ENCODE measurements at regions of chr16 and their contacts with region 1.

Region 1: DNA sequence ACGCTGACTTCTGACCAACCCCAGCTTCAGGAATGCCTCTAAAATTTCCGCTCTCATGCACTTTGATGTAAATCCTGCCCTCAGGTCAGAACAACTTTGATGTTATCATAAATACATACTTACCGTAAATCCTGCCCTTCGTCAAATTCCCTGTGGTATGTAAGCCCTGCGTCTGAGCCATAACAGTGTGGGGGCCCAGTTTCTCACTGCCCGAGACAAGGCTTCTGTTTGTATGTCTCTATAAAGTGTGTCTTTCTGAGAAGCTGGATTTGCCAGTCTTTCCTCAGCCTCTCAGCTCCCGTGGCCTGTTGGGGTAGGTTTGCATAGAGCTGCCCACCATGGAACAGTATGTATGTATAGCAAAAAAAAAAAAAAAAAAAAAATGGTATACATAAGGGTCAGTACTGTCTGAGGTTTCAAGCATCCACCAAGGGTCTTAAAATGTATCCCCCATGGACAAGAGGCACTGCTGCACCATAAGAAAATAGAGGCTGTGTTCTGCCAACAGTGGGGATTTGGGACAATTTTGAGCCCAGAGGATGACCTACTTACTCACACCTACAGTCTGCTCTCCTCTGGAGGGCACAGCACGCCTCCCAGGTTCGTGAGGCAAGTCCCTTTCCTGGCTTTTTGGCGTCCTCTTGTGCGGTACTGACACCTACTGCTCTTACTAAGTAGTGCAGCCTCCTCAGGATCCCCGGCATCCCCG is 17.5 kb downstream of the PRMT7 start:
- DNase-seq: peak; percentile 85
- ATAC-seq: peak; percentile 99
- H3K4me3 Mint-ChIP-seq: no peak overlapping the region
- H3K27ac Mint-ChIP-seq: peak overlapping the region; percentile 41
- H3K4me1 Mint-ChIP-seq: peaks cover 31% of the 10 kb centered on the region
- H3K27me3 Mint-ChIP-seq: no peaks in the 10 kb centered on the region
- CTCF ChIP-seq: peak; percentile 94

Region 2: GRCh38 chr16:68237243-68238028 is 90.9 kb before region 1 on chr16:
- CTCF ChIA-PET with region 1: interaction called, 43 read pairs
- POLR2A ChIA-PET with region 1: interaction called, 3 read pairs
- intact Hi-C with region 1: no loop called
- DNase-seq: peak; percentile 96
- ATAC-seq: peak; percentile 81
- H3K4me3 Mint-ChIP-seq: peak overlapping the region; percentile 87
- H3K27ac Mint-ChIP-seq: peak overlapping the region; percentile 94
- H3K4me1 Mint-ChIP-seq: peaks cover 36% of the 10 kb centered on the region
- H3K27me3 Mint-ChIP-seq: no peaks in the 10 kb centered on the region
- CTCF ChIP-seq: no peak

Region 3: GRCh38 chr16:68251832-68252231 is 76.5 kb before region 1 on chr16:
- CTCF ChIA-PET with region 1: interaction called, 444 read pairs
- POLR2A ChIA-PET with region 1: interaction called, 6 read pairs
- intact Hi-C with region 1: no loop called
- DNase-seq: no peak
- ATAC-seq: no peak
- H3K4me3 Mint-ChIP-seq: no peak overlapping the region
- H3K27ac Mint-ChIP-seq: no peak overlapping the region
- H3K4me1 Mint-ChIP-seq: peaks cover under 1% of the 10 kb centered on the region
- H3K27me3 Mint-ChIP-seq: no peaks in the 10 kb centered on the region
- CTCF ChIP-seq: no peak

Region 4: DNA sequence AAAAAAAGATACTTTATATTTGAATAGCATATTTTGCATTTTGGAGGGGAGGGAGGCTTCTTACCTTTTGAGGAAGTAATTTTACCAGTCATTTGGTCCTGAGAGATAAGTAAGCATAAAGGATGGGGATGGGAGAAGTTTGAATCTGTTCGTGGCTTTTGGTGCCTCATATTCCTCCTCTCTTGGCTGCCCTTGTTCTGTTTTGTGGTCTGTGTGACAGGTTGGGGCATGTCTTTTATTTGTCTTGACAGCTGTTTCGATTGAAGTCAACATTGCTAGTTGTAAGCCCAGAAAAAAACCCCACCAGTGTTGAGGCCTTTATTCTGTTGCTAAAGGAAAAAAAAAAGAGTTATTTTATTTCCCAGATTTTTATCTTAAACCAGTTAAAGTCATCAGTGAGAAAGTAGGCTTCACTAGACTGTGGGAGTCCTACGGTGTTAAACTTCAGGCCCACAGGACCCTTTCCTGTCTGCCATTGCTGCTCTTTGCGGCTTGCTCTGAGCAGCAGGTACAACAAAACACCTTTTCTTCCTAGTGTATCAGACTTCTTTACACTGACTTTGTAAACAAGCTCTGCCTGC is 52.6 kb before region 1 on chr16:
- CTCF ChIA-PET with region 1: interaction called, 31 read pairs
- POLR2A ChIA-PET with region 1: interaction called, 4 read pairs
- intact Hi-C with region 1: no loop called
- DNase-seq: peak; percentile 59
- ATAC-seq: peak; percentile 71
- H3K4me3 Mint-ChIP-seq: peak overlapping the region; percentile 3
- H3K27ac Mint-ChIP-seq: peak overlapping the region; percentile 96
- H3K4me1 Mint-ChIP-seq: peaks cover 70% of the 10 kb centered on the region
- H3K27me3 Mint-ChIP-seq: no peaks in the 10 kb centered on the region
- CTCF ChIP-seq: no peak

Region 5: DNA sequence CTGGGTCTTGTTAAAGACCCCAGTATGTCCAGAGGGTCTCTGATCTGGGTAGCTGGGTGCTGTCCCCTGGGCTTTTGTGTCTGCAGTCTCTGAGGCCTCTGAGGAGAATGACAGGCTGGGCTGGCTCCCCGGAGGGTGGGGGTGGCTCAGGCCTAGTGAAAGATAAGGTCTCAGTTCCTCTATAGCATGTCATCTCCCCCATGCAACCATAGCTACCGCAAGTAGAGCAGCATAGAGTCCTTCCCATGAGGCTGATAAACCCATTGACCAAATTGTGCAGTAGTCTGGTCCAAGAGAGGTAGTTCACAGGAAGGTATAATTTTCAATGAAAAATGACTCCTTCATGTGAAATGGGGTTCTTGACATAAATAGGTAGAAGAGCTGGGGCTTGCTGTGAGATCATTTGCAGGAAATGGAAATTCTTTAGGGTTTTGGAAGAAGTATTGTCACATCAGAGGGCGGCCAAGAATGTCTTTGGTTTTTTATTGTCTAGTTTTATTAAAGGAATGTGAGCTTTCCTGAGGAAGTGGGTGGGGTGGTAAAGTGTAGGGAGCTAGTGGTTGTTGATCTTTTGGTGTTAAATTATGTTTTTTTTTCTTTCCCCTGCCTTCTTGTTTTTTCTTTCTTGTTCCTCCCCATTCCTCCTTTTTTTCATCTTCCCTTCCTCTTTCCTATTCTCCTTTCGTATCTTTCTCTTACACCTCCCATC is 38.5 kb before region 1 on chr16:
- CTCF ChIA-PET with region 1: interaction called, 36 read pairs
- POLR2A ChIA-PET with region 1: no interaction called
- intact Hi-C with region 1: no loop called
- DNase-seq: peak; percentile 89
- ATAC-seq: peak; percentile 89
- H3K4me3 Mint-ChIP-seq: peak overlapping the region; percentile 29
- H3K27ac Mint-ChIP-seq: peak overlapping the region; percentile 95
- H3K4me1 Mint-ChIP-seq: peaks cover 82% of the 10 kb centered on the region
- H3K27me3 Mint-ChIP-seq: no peaks in the 10 kb centered on the region
- CTCF ChIP-seq: no peak

Region 6: GRCh38 chr16:68310761-68311511 is 17.4 kb before region 1 on chr16 and contains the starts of genes PRMT7 and SLC7A6OS:
- CTCF ChIA-PET with region 1: interaction called, 21 read pairs
- POLR2A ChIA-PET with region 1: interaction called, 12 read pairs
- intact Hi-C with region 1: no loop called
- DNase-seq: peak; percentile 96
- ATAC-seq: peak; percentile 99
- H3K4me3 Mint-ChIP-seq: peak within 1 kb of the TSS; percentile 83
- H3K27ac Mint-ChIP-seq: peak within 1 kb of the TSS; percentile 89
- H3K4me1 Mint-ChIP-seq: peaks cover 46% of the 10 kb centered on the region
- H3K27me3 Mint-ChIP-seq: no peaks in the 10 kb centered on the region
- CTCF ChIP-seq: no peak
- total RNA-seq, gene PRMT7: 67.4 to 78.4 TPM
- total RNA-seq, gene SLC7A6OS: 20.2 to 23.1 TPM

Region 7: DNA sequence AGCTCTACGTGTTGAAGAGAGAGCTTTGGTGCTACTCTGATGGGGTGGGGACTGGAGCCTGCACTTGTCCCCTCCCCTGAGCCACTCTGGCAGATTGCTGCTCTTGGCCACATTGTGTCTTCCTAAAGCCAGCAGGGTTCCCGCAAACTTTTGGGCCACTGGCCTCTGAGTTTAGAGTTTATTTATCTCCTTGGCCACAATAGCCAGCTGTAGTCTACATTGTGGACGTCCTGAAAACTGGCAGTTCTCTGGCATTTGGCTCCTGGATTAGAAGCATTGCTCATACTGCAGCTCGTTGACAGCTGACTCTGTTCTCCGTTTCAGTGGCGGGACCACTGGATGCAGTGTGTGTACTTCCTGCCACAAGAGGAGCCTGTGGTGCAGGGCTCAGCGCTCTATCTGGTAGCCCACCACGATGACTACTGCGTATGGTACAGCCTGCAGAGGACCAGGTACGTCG is 17.1 kb after region 1 on chr16:
- CTCF ChIA-PET with region 1: interaction called, 23 read pairs
- POLR2A ChIA-PET with region 1: no interaction called
- intact Hi-C with region 1: no loop called
- DNase-seq: peak; percentile 81
- ATAC-seq: peak; percentile 98
- H3K4me3 Mint-ChIP-seq: no peak overlapping the region
- H3K27ac Mint-ChIP-seq: no peak overlapping the region
- H3K4me1 Mint-ChIP-seq: peaks cover 15% of the 10 kb centered on the region
- H3K27me3 Mint-ChIP-seq: no peaks in the 10 kb centered on the region
- CTCF ChIP-seq: no peak